ENCODE measurements at regions of chrX and their contacts with region 1.

Region 1: GRCh38 chrX:135185795-135186443 is 14.7 kb upstream of the CT55 start:
- DNase-seq: peak; percentile 43
- ATAC-seq: peak; percentile 78
- H3K4me3 Mint-ChIP-seq: no peak overlapping the region
- H3K27ac Mint-ChIP-seq: no peak overlapping the region
- H3K4me1 Mint-ChIP-seq: no peaks in the 10 kb centered on the region
- H3K27me3 Mint-ChIP-seq: peaks cover 11% of the 10 kb centered on the region
- CTCF ChIP-seq: no peak

Region 2: GRCh38 chrX:134782796-134783195 is 403.1 kb before region 1 on chrX:
- CTCF ChIA-PET with region 1: no interaction called
- POLR2A ChIA-PET with region 1: no interaction called
- intact Hi-C with region 1: no loop called
- DNase-seq: no peak
- ATAC-seq: no peak
- H3K4me3 Mint-ChIP-seq: no peak overlapping the region
- H3K27ac Mint-ChIP-seq: no peak overlapping the region
- H3K4me1 Mint-ChIP-seq: no peaks in the 10 kb centered on the region
- H3K27me3 Mint-ChIP-seq: no peaks in the 10 kb centered on the region
- CTCF ChIP-seq: peak; percentile 29

Region 3: GRCh38 chrX:135024526-135024925 is 161.4 kb before region 1 on chrX:
- CTCF ChIA-PET with region 1: no interaction called
- POLR2A ChIA-PET with region 1: no interaction called
- intact Hi-C with region 1: no loop called
- DNase-seq: no peak
- ATAC-seq: no peak
- H3K4me3 Mint-ChIP-seq: no peak overlapping the region
- H3K27ac Mint-ChIP-seq: no peak overlapping the region
- H3K4me1 Mint-ChIP-seq: peaks cover 13% of the 10 kb centered on the region
- H3K27me3 Mint-ChIP-seq: peaks cover 23% of the 10 kb centered on the region
- CTCF ChIP-seq: no peak

Region 4: DNA sequence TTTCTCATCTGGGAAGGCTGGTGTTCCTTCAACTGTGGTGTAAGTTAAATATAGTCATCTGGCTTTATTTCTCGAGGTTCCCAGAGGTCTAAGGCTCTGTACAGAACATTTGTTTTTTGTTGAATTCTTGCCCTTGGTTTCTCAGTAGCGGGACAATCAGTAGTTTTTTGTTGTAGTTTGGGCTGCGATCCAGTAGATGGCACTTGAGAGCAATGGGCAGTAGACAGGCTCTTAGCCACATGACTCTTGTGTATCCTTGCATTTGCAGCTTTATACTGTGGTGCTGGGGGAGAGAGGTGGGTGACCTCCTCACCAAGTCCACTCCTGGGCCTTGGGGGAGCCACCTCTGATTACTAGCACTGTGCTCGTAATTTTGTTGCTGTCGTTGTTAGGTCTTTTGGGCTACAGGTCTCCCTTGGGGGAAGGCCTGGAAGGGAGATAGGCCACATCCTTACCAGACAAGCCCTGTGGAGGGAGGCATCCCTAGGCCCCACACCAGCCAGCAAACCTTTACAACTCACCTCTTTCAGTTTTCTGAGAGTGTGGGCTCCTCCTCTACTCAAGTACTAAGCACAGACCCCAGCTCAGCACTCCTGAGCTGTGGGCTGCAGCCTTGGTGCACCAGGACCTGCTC is 73.7 kb before region 1 on chrX:
- CTCF ChIA-PET with region 1: interaction called, 11 read pairs
- POLR2A ChIA-PET with region 1: no interaction called
- intact Hi-C with region 1: no loop called
- DNase-seq: peak; percentile 45
- ATAC-seq: peak; percentile 78
- H3K4me3 Mint-ChIP-seq: no peak overlapping the region
- H3K27ac Mint-ChIP-seq: no peak overlapping the region
- H3K4me1 Mint-ChIP-seq: no peaks in the 10 kb centered on the region
- H3K27me3 Mint-ChIP-seq: peaks cover 21% of the 10 kb centered on the region
- CTCF ChIP-seq: peak; percentile 55

Measured in activated CD8-positive, alpha-beta T cell treated with anti-CD3 and anti-CD28 coated beads for 36 hours (primary cell).